Activated CD4-positive, alpha-beta memory T cell treated with anti-CD3 and anti-CD28 coated beads for 36 hours (primary cell): ENCODE measurements at regions of chr1 and their contacts with region 1.

Region 1: GRCh38 chr1:11059990-11060830 is at the start of gene SRM:
- DNase-seq: peak; percentile 93
- H3K4me3 Mint-ChIP-seq: peak within 1 kb of the TSS; percentile 94
- H3K27ac Mint-ChIP-seq: peak within 1 kb of the TSS; percentile 93
- H3K4me1 Mint-ChIP-seq: peaks cover 46% of the 10 kb centered on the region
- H3K27me3 Mint-ChIP-seq: no peaks in the 10 kb centered on the region
- total RNA-seq, gene SRM: 159 to 164 TPM

Region 2: DNA sequence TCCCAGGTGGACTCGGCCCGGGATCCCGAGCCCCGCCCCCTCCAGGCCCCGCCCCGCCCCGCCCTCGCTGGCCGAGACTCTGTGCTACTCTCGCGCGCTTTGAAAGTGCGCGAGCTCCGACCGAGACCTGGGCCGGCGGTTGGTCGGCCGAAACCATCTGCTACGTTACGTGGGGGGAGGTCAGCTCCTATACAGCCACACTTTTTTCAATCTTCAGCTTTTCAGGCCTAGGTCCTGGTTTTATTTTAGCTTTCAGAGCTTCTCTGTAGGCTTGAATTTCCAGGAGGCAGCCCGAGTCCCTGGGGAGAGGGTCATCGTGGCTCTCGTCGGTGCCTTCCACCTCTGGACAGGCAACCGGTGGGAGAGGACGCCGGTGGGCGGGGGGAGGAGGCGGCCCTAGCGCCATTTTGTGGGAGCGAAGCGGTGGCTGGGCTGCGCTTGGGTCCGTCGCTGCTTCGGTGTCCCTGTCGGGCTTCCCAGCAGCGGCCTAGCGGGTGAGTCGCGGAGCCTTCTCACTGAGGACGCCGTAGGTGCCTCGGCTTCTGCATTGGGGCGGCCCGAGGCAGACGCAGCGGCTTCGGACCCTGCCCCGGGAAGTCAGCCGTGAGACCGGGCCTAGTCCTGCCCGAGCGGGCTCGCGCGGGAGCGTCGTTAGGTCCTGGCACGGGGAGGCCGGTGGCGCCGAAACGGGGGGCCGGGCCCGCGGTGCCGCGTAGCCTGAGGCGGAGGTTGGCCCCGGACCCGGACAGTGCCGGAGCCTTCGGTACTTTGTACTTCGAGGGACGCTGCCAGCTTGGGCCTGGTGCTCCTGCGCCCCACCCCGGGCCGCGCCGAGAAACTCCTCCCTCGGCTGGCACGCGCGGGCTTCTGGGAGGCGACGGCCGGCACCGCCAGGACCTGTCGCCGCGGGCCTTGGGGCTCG is 47.7 kb before region 1 on chr1 and contains the start of gene TARDBP:
- CTCF ChIA-PET with region 1: no interaction called
- POLR2A ChIA-PET with region 1: interaction called, 4 read pairs
- intact Hi-C with region 1: loop called (anchors 2 kb)
- DNase-seq: peak; percentile 92
- H3K4me3 Mint-ChIP-seq: peak within 1 kb of the TSS; percentile 87
- H3K27ac Mint-ChIP-seq: peak within 1 kb of the TSS; percentile 98
- H3K4me1 Mint-ChIP-seq: peaks cover 30% of the 10 kb centered on the region
- H3K27me3 Mint-ChIP-seq: no peaks in the 10 kb centered on the region
- total RNA-seq, gene TARDBP: 175 to 177 TPM

Region 3: DNA sequence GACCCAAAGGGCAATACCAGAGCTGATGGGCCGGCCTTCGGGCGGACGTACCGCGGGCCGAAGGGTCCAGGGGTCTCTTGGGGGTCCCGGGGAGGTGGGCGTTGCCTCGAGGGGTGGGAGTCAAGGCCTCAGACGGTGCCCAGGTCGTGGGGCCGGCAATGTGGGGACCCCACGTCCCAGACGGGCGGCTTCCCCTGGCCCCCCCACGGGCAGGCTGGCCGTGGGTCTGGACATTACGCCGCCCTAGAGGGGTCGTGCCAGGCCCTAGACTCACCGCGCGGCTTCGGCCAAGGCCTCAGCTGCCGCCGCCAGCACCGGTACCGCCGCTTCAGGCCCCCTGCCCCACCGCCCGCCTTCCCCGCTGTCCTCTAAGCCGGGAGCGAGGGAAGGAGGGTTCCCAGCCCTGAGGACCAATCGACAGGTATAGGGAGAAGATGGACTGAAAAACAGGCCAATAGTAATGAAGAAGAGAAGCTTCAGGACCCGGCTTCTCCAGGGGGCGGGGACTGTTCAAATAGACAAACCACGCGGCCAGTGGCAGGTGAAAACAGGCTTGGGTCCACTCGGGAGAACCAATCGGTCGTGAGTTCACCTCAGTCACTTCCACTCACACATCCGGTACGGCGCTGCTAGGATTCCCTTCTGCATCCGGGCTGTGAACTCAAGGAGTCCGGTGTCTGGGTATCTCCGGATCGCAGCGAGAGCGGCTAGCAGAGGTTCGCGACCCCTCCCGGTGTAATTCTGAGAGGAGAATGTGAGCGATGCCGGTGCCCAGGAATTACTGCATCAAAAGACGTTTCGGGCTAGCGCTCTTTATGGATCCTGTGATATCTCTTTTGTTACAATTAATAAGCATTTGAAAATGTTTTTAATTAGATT is 202.2 kb after region 1 on chr1 and contains the start of gene MTOR:
- CTCF ChIA-PET with region 1: no interaction called
- POLR2A ChIA-PET with region 1: no interaction called
- intact Hi-C with region 1: loop called (anchors 10 kb)
- DNase-seq: peak; percentile 99
- H3K4me3 Mint-ChIP-seq: peak within 1 kb of the TSS; percentile 81
- H3K27ac Mint-ChIP-seq: peak within 1 kb of the TSS; percentile 77
- H3K4me1 Mint-ChIP-seq: peaks cover 14% of the 10 kb centered on the region
- H3K27me3 Mint-ChIP-seq: no peaks in the 10 kb centered on the region
- total RNA-seq, gene MTOR: 35.8 to 39.4 TPM